CD4-positive, alpha-beta memory T cell (primary cell): ENCODE measurements at regions of chr9 and their contacts with region 1.

Region 1: DNA sequence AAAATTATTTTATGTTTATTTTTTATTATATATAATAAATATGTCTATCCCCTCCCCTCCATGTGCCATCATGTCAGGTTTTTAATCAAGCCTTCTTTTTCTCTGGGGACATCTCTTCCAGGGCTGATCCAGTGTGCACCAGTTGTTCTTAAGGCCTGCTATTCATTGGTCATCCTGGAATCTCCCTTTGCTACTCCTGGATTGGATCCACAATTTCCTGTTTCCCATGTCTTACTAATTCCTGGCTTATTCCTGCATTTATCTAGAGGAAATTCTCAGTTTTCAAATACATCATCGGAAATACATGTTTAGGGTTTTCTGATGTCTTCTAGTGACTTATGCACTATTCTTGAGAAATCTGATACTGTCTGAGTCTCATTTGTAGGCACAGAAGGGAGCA is 56.8 kb downstream of the ANGPTL2 start:
- DNase-seq: no peak
- H3K4me3 ChIP-seq: no peak overlapping the region
- H3K4me3 Mint-ChIP-seq: no peak overlapping the region
- H3K27ac ChIP-seq: no peak overlapping the region
- H3K27ac Mint-ChIP-seq: no peak overlapping the region
- H3K4me1 ChIP-seq: no peaks in the 10 kb centered on the region
- H3K4me1 Mint-ChIP-seq: peaks cover 0 to 3% (median 1%) of the 10 kb centered on the region in 4 donors
- H3K27me3 ChIP-seq: no peaks in the 10 kb centered on the region
- H3K27me3 Mint-ChIP-seq: no peaks in the 10 kb centered on the region

Region 2: DNA sequence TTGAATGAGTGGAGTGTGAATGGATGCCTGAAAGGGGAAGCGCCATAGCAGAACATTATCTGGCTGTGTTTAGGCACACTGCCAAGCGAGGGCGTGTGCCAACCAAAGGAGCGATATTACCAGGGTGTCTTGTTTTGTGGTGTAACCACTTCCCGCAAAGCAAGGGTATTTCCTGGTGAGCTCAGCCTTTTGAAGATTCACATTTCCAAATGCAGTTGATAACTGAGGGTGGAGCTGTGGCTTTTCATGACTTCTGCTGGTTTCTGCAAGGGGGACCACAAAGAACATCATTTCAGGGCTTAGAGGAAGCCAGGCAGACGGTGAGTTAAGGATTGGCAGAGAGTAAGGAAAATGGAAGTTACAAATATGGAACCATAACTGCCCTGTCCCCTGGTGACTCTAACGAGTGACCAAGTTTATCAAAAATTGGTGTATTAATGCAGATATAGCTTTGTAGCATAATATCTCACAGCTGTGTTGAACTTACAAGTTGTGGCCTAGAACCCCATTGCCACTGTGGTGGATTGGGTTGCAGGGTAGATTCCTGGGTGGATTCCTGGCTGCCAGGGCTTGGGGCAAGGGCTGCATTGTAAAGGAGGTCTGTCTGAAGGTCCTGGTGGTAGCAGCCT is 79.6 kb before region 1 on chr9:
- CTCF ChIA-PET with region 1: no interaction called
- POLR2A ChIA-PET with region 1: no interaction called
- intact Hi-C with region 1: no loop called
- DNase-seq: peak; percentile 93 to 97 (median 95)
- H3K4me3 ChIP-seq: peak overlapping the region; percentile 1 to 25
- H3K4me3 Mint-ChIP-seq: peak overlapping the region; percentile 33 to 86 (median 68)
- H3K27ac ChIP-seq: peak overlapping the region; percentile 33
- H3K27ac Mint-ChIP-seq: peak overlapping the region; percentile 57 to 95 (median 86)
- H3K4me1 ChIP-seq: peaks cover 65% of the 10 kb centered on the region
- H3K4me1 Mint-ChIP-seq: peaks cover 57 to 82% (median 68%) of the 10 kb centered on the region in 4 donors
- H3K27me3 ChIP-seq: no peaks in the 10 kb centered on the region
- H3K27me3 Mint-ChIP-seq: peaks cover 5 to 18% of the 10 kb centered on the region in 2 donors

Region 3: DNA sequence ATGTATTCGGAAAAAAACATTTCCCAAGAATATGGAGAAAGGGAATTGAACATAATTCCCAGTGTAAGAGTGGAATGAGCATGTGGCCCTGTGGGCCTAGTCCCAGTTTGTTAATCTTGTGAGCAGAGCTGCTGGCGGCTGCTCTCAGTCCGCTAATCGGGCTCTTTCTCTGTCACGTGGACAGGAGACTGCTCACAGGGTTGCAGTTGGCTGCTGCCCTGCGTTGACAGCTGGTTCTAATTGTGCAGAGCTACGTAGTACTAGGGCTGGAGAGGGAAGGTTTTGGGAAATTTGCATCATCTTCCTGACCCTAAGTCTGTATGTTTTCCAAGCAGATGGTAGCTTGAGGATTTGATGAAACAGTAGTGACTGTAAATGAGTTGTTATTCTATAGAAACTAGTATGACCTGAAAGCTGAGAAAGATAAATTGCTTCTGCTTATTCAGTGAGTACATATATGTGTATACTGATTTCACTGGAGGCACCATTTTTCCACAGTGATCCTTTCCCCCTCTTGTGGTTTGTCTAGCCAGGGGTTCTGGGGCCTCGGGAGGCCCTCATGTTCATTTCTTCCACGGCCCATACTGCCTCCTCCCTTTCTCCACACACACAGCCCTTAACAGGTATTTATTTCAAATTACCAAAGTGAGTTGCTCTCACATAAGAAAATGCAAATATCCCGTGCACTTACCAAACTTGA is 43.8 kb before region 1 on chr9:
- CTCF ChIA-PET with region 1: no interaction called
- POLR2A ChIA-PET with region 1: no interaction called
- intact Hi-C with region 1: no loop called
- DNase-seq: no peak
- H3K4me3 ChIP-seq: no peak overlapping the region
- H3K4me3 Mint-ChIP-seq: no peak overlapping the region
- H3K27ac ChIP-seq: no peak overlapping the region
- H3K27ac Mint-ChIP-seq: no peak overlapping the region
- H3K4me1 ChIP-seq: no peaks in the 10 kb centered on the region
- H3K4me1 Mint-ChIP-seq: peaks cover 0 to 6% (median under 1%) of the 10 kb centered on the region in 4 donors
- H3K27me3 ChIP-seq: no peaks in the 10 kb centered on the region
- H3K27me3 Mint-ChIP-seq: peaks cover 0 to 1% of the 10 kb centered on the region in 2 donors

Region 4: GRCh38 chr9:127035951-127036350 is 29.6 kb before region 1 on chr9:
- CTCF ChIA-PET with region 1: no interaction called
- POLR2A ChIA-PET with region 1: no interaction called
- intact Hi-C with region 1: no loop called
- DNase-seq: no peak
- H3K4me3 ChIP-seq: no peak overlapping the region
- H3K4me3 Mint-ChIP-seq: no peak overlapping the region
- H3K27ac ChIP-seq: no peak overlapping the region
- H3K27ac Mint-ChIP-seq: no peak overlapping the region
- H3K4me1 ChIP-seq: no peaks in the 10 kb centered on the region
- H3K4me1 Mint-ChIP-seq: no peaks in the 10 kb centered on the region
- H3K27me3 ChIP-seq: no peaks in the 10 kb centered on the region
- H3K27me3 Mint-ChIP-seq: no peaks in the 10 kb centered on the region

Region 5: GRCh38 chr9:127083138-127083980 is 17.8 kb after region 1 on chr9:
- CTCF ChIA-PET with region 1: no interaction called
- POLR2A ChIA-PET with region 1: no interaction called
- intact Hi-C with region 1: no loop called
- DNase-seq: no peak
- H3K4me3 ChIP-seq: no peak overlapping the region
- H3K4me3 Mint-ChIP-seq: no peak overlapping the region
- H3K27ac ChIP-seq: no peak overlapping the region
- H3K27ac Mint-ChIP-seq: no peak overlapping the region
- H3K4me1 ChIP-seq: peaks cover 10% of the 10 kb centered on the region
- H3K4me1 Mint-ChIP-seq: peaks cover 6 to 16% (median 8%) of the 10 kb centered on the region in 4 donors
- H3K27me3 ChIP-seq: no peaks in the 10 kb centered on the region
- H3K27me3 Mint-ChIP-seq: no peaks in the 10 kb centered on the region

Region 6: DNA sequence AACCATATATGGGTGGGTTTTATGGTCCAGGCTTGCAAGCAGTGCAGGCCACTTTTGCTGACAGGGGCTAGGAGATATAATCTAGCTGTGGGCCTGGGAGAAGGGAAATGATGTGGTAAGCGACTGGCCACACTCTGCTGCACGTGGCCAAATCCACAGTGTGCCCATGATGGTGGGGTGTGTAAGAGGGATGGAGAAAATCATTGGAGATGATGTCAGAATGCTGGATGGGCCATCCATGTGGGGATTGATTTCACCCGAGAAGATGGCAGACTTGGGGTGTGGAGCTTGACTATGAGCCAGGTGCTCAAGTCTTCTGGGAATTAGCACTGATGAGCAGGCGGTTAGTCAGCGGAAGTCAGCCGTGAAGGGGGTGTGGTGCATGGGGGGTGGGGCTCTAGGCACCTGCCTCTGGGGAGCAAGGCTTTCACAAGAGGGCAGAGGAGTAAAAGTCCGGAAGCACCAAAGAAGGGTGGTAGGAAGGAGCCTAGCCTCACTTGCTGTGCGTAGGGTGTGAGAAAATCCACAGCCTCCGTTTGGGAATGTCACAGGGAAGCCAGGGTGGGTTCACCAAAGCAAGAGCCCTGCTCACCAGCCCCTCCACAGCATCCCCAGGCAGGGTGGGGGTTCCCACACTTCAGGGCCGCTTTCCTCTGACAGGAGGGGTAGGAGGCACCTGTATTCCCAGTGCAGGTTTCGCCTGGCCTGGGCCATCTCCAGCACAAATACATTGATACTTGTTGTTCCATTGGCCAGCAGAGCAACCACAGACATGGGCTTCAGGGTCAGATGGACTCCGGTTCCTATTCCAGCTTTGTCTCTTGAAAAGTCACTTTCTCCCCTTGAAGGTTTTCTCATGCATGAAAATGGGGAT is 101.3 kb after region 1 on chr9:
- CTCF ChIA-PET with region 1: no interaction called
- POLR2A ChIA-PET with region 1: no interaction called
- intact Hi-C with region 1: loop called (anchors 10 kb)
- DNase-seq: no peak
- H3K4me3 ChIP-seq: no peak overlapping the region
- H3K4me3 Mint-ChIP-seq: no peak overlapping the region
- H3K27ac ChIP-seq: no peak overlapping the region
- H3K27ac Mint-ChIP-seq: peak overlapping the region in 2 of 7 donors; percentile 52 to 91
- H3K4me1 ChIP-seq: peaks cover 18% of the 10 kb centered on the region
- H3K4me1 Mint-ChIP-seq: peaks cover 7 to 21% (median 16%) of the 10 kb centered on the region in 4 donors
- H3K27me3 ChIP-seq: no peaks in the 10 kb centered on the region
- H3K27me3 Mint-ChIP-seq: no peaks in the 10 kb centered on the region